Gastrocnemius medialis (tissue), 4 donors: ENCODE measurements at regions of chr18 and their contacts with region 1.

Region 1: DNA sequence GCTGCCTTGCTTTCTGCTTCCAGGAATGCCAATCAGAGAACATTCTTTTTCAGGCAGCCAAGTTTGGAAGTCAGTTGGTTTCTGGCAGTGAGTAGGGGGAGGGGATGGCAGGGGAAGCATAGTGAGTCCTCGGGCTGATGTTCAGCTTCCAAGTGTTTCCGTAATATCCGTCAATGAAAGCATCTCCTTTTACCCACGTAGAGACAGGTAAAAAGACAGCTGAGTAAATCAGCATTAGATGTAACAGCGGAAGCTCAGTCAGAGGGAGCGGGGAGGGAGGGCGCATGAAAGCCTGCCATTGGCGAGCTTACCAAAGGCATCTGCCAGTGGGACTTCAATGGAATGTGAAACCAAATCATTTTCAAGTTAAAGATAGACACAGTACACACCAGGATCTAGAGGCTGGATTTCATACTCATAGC is 117.1 kb upstream of the DTNA start:
- DNase-seq: peak; percentile 74 to 88
- ATAC-seq: peak; percentile 87 to 90
- H3K4me3 ChIP-seq: peak overlapping the region; percentile 47 to 50 (median 48)
- H3K27ac ChIP-seq: peak overlapping the region; percentile 81 to 87 (median 86)
- H3K4me1 ChIP-seq: peaks cover 36 to 44% of the 10 kb centered on the region in 2 donors
- H3K27me3 ChIP-seq: no peaks in the 10 kb centered on the region
- CTCF ChIP-seq: no peak
- POLR2A ChIP-seq: peak; percentile 38 to 60

Region 2: GRCh38 chr18:34493099-34493544 is 99.8 kb before region 1 on chr18:
- in situ Hi-C with region 1: no loop called
- intact Hi-C with region 1: loop called (anchors 1 kb)
- DNase-seq: peak; percentile 63 to 85
- ATAC-seq: peak; percentile 87 to 88
- H3K4me3 ChIP-seq: peak overlapping the region; percentile 69 to 79 (median 72)
- H3K27ac ChIP-seq: peak overlapping the region; percentile 82 to 94 (median 92)
- H3K4me1 ChIP-seq: peaks cover 19 to 20% of the 10 kb centered on the region in 2 donors
- H3K27me3 ChIP-seq: no peaks in the 10 kb centered on the region
- CTCF ChIP-seq: no peak
- POLR2A ChIP-seq: no peak

Region 3: DNA sequence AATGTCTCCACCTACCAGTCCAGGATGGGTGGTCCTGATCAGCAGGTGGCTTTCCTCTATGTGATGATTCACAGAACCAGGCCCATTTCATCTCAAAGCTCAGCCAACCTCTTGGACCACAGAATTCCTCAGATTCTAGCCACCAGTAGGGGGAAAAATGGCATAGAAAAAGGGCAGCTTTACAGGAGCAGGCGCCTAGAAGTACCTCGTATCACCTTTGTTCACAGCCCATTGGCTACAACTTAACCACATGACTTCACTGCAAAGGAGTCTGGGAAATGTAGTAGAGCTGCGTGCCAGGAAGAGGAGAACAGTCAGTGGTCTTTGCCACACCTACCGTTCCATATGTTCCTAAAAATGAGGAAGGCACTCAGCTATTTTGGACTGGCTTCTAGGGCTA is 54.3 kb after region 1 on chr18:
- in situ Hi-C with region 1: loop called in 1 of 4 experiments (anchors 10 kb)
- intact Hi-C with region 1: loop called (anchors 2 kb)
- DNase-seq: peak in 1 of 2 donors; percentile 28
- ATAC-seq: peak in 1 of 2 donors; percentile 17
- H3K4me3 ChIP-seq: no peak overlapping the region
- H3K27ac ChIP-seq: peak overlapping the region; percentile 11 to 87 (median 86)
- H3K4me1 ChIP-seq: peaks cover 61 to 68% of the 10 kb centered on the region in 2 donors
- H3K27me3 ChIP-seq: no peaks in the 10 kb centered on the region
- CTCF ChIP-seq: no peak
- POLR2A ChIP-seq: no peak

Region 4: DNA sequence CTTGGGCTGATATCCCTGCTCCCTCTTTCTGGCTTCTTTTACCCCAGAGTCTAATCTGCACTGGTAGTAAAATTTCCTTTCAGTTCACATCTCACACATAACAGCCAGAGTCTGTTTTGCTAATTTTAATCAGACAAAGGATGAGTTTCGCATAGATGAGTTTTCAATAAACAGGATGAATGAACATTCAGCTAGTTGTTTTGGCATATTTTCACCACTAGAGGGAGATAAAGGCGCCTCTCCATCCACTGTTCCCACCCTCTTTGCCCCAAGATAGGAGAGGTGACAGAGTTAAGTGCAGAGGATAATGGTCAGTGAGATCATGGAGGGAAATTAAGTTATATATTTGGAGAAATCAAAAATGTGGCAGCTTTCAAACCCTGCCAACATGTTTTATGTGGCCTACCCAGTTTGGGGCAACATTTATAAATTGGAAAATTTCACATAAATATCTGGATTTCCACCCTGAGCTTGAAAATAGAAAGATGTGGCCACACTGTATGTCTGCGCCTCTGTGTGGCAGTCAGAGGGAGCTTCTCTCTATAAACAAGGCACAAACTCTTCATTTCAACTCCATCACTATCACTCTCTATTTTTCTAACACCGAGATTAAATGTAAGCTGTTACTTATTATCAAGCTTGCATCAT is 68.6 kb after region 1 on chr18:
- in situ Hi-C with region 1: no loop called
- intact Hi-C with region 1: loop called (anchors 2 kb)
- DNase-seq: no peak
- ATAC-seq: peak; percentile 35 to 46
- H3K4me3 ChIP-seq: no peak overlapping the region
- H3K27ac ChIP-seq: peak overlapping the region; percentile 52 to 91 (median 86)
- H3K4me1 ChIP-seq: peaks cover 29 to 38% of the 10 kb centered on the region in 2 donors
- H3K27me3 ChIP-seq: no peaks in the 10 kb centered on the region
- CTCF ChIP-seq: peak; percentile 71 to 82 (median 77)
- POLR2A ChIP-seq: no peak

Region 5: GRCh38 chr18:34707670-34708069 is 114.7 kb after region 1 on chr18:
- in situ Hi-C with region 1: no loop called
- intact Hi-C with region 1: loop called (anchors 5 kb)
- DNase-seq: peak; percentile 50 to 57
- ATAC-seq: peak; percentile 61 to 72
- H3K4me3 ChIP-seq: peak overlapping the region in 3 of 4 donors; percentile 0 to 22 (median 14)
- H3K27ac ChIP-seq: peak overlapping the region; percentile 59 to 82 (median 78)
- H3K4me1 ChIP-seq: peaks cover 44 to 51% of the 10 kb centered on the region in 2 donors
- H3K27me3 ChIP-seq: no peaks in the 10 kb centered on the region
- CTCF ChIP-seq: no peak
- POLR2A ChIP-seq: no peak

Region 6: DNA sequence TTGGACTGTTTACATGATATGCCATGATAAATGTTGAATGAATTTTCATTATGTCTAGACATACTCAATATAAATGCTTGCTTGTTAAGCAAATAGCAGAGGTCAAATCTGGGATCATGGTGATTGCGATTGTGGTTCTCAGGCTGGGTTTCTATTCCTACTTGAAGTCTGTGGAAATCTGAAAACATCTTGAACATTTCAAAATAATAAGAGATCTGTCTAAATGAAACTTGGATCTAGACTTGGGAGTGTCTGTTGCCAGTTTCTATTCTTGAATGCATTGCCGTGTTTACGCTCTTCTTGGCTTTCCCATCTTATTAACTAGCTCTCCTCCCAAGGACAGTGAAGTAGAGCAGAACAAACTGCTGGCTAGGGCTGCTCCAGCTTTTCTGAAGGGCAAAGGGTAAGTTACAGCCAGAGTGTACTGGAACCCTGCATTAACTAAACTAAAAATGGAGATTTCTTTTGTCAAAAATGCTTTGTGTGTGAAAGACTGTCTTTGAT is 244.8 kb after region 1 on chr18:
- in situ Hi-C with region 1: no loop called
- intact Hi-C with region 1: loop called (anchors 5 kb)
- DNase-seq: peak; percentile 40 to 60
- ATAC-seq: peak; percentile 86 to 90
- H3K4me3 ChIP-seq: peak overlapping the region; percentile 22 to 38 (median 32)
- H3K27ac ChIP-seq: peak overlapping the region; percentile 82 to 89 (median 86)
- H3K4me1 ChIP-seq: peaks cover 47 to 56% of the 10 kb centered on the region in 2 donors
- H3K27me3 ChIP-seq: no peaks in the 10 kb centered on the region
- CTCF ChIP-seq: no peak
- POLR2A ChIP-seq: no peak

Region 7: GRCh38 chr18:35071819-35072247 is 478.9 kb after region 1 on chr18:
- in situ Hi-C with region 1: no loop called
- intact Hi-C with region 1: loop called (anchors 5 kb)
- DNase-seq: peak in 1 of 2 donors; percentile 51
- ATAC-seq: peak; percentile 77 to 85
- H3K4me3 ChIP-seq: no peak overlapping the region
- H3K27ac ChIP-seq: peak overlapping the region; percentile 64 to 90 (median 80)
- H3K4me1 ChIP-seq: peaks cover 52 to 60% of the 10 kb centered on the region in 2 donors
- H3K27me3 ChIP-seq: no peaks in the 10 kb centered on the region
- CTCF ChIP-seq: no peak
- POLR2A ChIP-seq: no peak